ENCODE measurements at regions of chr17 and their contacts with region 1.

Region 1: DNA sequence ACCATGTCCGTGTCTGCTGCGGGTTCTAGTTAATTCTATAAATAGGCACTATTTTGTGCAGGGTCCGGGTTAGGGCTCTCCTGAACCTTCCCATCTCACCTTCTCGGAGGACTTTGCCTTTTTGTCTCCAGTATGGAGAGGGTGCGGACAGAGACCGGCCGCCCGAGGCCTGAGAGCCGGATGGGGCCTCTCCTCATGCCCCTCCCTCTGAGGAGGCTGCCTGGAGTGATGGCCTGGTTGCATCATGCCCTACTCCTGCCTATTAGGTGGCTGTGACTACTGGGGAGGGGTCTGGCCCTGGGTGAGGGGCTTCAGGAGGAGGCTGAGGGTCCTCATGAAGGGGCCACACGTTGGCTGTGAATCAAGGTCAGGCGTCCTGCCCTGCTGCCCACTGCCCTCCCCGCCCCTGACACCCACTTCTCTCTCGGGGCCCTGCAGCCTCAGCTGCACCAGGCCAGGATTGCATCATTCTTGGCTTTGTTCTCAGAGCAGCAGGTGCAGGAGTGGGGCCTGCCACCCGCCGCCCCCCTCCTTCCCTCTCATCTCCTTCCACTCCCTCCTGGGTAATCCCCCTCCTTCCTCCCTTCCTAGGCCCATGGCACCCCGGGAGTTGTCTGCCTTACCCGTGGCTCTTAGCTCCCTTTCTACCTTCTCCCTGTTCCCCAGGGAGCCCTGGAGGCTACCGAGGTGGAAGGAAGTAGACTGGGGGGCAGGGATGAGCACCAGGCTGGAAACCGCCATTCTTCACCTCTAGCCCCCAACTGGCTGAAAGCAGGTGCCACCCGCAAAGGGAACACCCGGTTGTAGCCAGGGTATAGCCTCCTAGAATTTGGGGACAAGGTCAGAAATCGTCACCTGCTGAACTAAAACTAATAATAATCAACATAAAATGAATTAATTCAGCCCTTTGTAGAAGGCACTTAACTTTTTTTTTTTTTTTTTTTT is 12.7 kb upstream of the ARHGAP23 start:
- DNase-seq: no peak
- H3K4me3 ChIP-seq: no peak overlapping the region
- H3K27ac ChIP-seq: no peak overlapping the region
- H3K4me1 ChIP-seq: peaks cover 4% of the 10 kb centered on the region
- H3K27me3 ChIP-seq: no peaks in the 10 kb centered on the region
- CTCF ChIP-seq: no peak
- EP300 ChIP-seq: no peak
- POLR2A ChIP-seq: no peak

Region 2: GRCh38 chr17:38351412-38352222 is 63.9 kb before region 1 on chr17 and contains the start of gene SOCS7:
- intact Hi-C with region 1: loop called (anchors 2 to 10 kb)
- DNase-seq: peak; percentile 95 to 97 (median 97)
- H3K4me3 ChIP-seq: peak within 1 kb of the TSS; percentile 64
- H3K27ac ChIP-seq: peak within 1 kb of the TSS; percentile 40 to 75
- H3K4me1 ChIP-seq: peaks cover 11% of the 10 kb centered on the region
- H3K27me3 ChIP-seq: no peaks in the 10 kb centered on the region
- CTCF ChIP-seq: no peak
- EP300 ChIP-seq: no peak
- POLR2A ChIP-seq: peak; percentile 79
- total RNA-seq, gene SOCS7: 12.8 to 23.8 (median 21.1) TPM

Region 3: DNA sequence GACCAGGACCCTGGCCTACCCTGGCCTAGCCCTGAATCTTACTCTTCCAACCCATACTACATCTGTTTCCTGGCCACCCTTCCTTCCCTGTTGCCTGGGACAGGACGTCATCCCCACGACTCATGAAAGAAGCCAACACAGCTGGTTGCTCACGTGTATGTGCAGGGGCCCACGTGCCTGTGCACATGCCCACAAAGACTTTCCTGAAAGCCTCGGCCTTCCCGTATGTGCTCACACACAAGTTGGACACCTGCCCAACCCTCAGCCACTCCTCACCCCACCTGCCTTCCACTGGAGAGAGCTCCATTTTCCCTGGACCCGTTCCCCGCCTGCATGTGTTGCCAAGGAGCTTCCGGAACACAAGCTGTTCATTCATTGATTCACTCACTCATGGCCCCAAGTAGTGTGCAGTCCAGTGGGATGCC is 728.9 kb after region 1 on chr17:
- intact Hi-C with region 1: no loop called
- DNase-seq: peak; percentile 80 to 94 (median 82)
- H3K4me3 ChIP-seq: no peak overlapping the region
- H3K27ac ChIP-seq: peak overlapping the region in 1 of 2 donors; percentile 41
- H3K4me1 ChIP-seq: no peaks in the 10 kb centered on the region
- H3K27me3 ChIP-seq: no peaks in the 10 kb centered on the region
- CTCF ChIP-seq: no peak
- EP300 ChIP-seq: peak; percentile 7
- POLR2A ChIP-seq: no peak